Activated CD8-positive, alpha-beta T cell treated with anti-CD3 and anti-CD28 coated beads, Interleukin-2, amount 10 ng/mL, durations not matched to agents 7 days and 5 days (primary cell): ENCODE measurements at regions of chr19 and their contacts with region 1.

Region 1: DNA sequence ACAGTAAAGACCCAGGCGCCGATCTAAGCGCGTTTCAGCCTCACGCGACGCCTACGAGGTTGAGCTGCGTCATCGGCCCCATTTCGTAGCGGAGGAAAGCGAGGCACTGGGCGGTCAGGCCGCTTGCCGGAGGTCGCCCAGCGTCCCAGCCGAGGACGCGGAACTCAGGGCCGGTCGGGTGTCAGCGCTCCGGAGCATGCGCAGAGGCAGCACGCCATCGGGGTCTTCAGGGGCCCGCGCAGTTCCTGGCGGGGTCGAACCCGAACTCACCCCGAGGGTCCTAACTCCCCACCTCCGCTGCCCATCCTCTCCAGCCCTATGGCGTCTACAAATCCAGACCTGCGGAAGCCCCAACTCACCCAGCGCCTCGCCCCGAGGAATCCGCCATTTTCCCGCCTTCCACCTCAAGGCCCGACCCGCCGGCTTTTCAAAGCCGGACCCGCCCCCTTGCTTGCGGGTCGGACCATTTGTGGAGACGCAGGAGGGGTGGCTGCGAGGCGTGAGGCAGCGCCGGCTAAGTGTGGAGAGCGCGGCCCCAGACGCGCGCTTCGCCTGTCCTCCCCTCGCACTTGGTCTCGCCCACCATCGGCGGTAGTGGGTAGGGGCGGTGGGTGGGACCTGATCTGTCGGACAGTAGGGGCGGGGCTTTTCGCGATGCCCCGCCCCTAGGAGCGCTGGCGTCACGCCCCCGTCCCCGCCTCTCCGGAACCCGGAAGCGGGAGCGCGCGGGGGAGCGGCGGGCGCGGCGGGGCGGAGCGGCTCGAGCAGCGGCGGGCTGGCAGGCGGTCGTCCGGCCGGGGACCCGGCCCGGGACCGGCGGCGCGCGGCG is at the starts of genes HAUS8 and MYO9B:
- DNase-seq: peak; percentile 100
- ATAC-seq: peak; percentile 94
- H3K4me3 Mint-ChIP-seq: peak within 1 kb of the TSS; percentile 100
- H3K27ac Mint-ChIP-seq: peak within 1 kb of the TSS; percentile 96
- H3K4me1 Mint-ChIP-seq: peaks cover 65% of the 10 kb centered on the region
- H3K27me3 Mint-ChIP-seq: no peaks in the 10 kb centered on the region
- total RNA-seq, gene HAUS8: 66.0 to 66.7 TPM
- total RNA-seq, gene MYO9B: 276 to 280 TPM

Region 2: DNA sequence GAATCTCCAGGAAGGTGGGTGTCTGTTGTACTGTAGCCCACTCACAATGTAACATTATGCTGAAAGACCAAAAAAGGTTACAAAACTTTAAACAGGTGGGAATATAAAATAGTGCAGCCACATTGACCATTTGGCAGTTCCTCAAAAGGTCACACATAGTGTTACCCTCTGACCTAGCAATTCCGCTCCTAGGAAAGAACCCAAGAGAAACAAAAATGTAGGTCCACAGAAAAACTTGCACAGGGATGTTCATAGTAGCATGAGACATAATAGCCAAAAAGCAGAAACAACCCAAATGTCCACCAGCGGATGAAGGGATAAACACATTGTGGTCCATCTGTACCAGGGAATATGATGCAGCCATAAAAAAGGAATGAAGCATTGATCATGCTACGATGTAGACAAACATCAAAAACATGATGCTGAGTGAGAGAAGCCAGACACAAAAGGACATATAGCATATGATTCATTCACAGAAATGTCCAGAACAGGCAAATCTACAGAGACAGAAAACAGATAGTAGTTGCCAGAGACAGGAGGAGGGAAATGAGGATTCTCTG is 76.5 kb before region 1 on chr19:
- CTCF ChIA-PET with region 1: no interaction called
- POLR2A ChIA-PET with region 1: no interaction called
- DNase-seq: no peak
- ATAC-seq: no peak
- H3K4me3 Mint-ChIP-seq: no peak overlapping the region
- H3K27ac Mint-ChIP-seq: no peak overlapping the region
- H3K4me1 Mint-ChIP-seq: no peaks in the 10 kb centered on the region
- H3K27me3 Mint-ChIP-seq: no peaks in the 10 kb centered on the region

Region 3: GRCh38 chr19:17041976-17042375 is 33.3 kb before region 1 on chr19:
- CTCF ChIA-PET with region 1: no interaction called
- POLR2A ChIA-PET with region 1: no interaction called
- DNase-seq: no peak
- ATAC-seq: no peak
- H3K4me3 Mint-ChIP-seq: no peak overlapping the region
- H3K27ac Mint-ChIP-seq: no peak overlapping the region
- H3K4me1 Mint-ChIP-seq: no peaks in the 10 kb centered on the region
- H3K27me3 Mint-ChIP-seq: no peaks in the 10 kb centered on the region

Region 4: DNA sequence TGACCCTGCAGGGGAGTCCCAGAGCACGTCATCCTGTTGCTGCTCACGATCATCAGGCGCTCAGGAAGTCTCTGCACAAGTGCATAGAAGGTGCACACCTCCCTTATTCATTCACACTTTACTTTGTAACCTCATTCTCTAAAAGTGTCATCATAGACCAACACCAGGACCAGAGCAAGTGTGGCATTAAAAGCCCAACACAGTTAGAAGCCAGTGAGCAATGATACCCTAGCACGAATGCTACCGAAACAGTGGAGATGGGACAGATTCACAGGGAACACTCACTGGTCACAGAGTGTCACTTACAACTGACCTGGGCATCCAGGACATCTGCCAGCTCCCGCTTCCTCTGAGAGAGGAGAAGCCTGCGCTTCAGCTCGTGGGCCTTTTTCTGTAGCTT is 17.0 kb before region 1 on chr19:
- CTCF ChIA-PET with region 1: no interaction called
- POLR2A ChIA-PET with region 1: no interaction called
- DNase-seq: no peak
- ATAC-seq: no peak
- H3K4me3 Mint-ChIP-seq: no peak overlapping the region
- H3K27ac Mint-ChIP-seq: no peak overlapping the region
- H3K4me1 Mint-ChIP-seq: peaks cover 4% of the 10 kb centered on the region
- H3K27me3 Mint-ChIP-seq: no peaks in the 10 kb centered on the region

Region 5: DNA sequence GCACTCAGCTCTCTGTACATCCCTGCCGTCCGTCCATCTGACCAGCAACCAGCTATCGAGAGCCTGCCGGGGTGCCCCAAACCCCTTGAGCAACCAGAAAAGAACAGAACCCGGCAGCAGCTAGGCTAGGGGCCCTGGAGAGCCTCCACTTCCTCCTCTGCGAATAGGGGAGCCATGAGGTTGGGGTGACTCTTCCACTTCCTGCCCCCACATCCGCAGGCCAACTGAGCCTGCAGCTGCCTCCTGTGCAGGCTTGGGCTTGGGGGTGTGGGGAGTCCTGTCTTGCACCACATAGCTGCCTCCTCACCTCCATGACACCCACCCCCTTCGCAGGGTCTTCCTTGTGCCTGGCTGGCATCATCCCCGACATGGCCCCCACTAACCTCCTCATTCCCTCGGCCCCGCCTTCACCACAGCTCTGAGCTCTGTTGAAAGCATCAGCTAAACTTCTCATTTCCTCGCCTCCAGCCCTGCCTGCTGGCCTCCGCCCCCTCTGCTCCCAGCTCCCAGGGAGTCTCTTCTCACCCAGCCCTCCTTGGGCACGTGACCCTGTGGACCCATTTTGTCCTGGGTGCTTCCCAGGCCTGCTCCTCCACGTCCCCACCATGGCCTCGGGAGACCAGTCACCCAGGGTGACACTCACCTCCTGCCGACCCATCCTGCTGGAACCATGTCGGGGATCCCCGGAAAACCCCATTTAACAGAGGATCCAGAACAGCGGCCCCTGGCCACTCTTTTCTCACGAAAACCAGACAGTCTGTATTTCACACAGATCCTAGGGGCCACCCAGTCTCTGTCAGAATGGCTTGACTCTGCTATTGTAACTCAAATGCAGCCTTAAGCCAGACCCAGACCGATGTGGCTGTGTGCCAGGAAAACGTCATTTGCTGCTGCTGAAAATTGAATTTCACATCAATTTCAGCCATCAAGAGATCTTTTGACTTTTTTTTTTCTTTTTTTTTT is 50.7 kb after region 1 on chr19:
- CTCF ChIA-PET with region 1: interaction called, 5 read pairs
- POLR2A ChIA-PET with region 1: interaction called, 33 read pairs
- DNase-seq: peak; percentile 92
- ATAC-seq: peak; percentile 95
- H3K4me3 Mint-ChIP-seq: peak overlapping the region; percentile 83
- H3K27ac Mint-ChIP-seq: peak overlapping the region; percentile 100
- H3K4me1 Mint-ChIP-seq: peaks cover 81% of the 10 kb centered on the region
- H3K27me3 Mint-ChIP-seq: no peaks in the 10 kb centered on the region